Psoas muscle (tissue), 8 donors: ENCODE measurements at regions of chr1 and their contacts with region 1.

Region 1: GRCh38 chr1:161382214-161383019 is 14.7 kb upstream of the CFAP126 start:
- DNase-seq: no peak
- ATAC-seq: peak; percentile 73 to 91 (median 76)
- H3K4me3 ChIP-seq: no peak overlapping the region
- H3K27ac ChIP-seq: no peak overlapping the region
- H3K4me1 ChIP-seq: peaks cover 3% of the 10 kb centered on the region
- H3K27me3 ChIP-seq: no peaks in the 10 kb centered on the region
- CTCF ChIP-seq: peak; percentile 71

Region 2: GRCh38 chr1:161192476-161193465 is 189.6 kb before region 1 on chr1:
- intact Hi-C with region 1: loop called in 1 of 2 experiments (anchors 5 kb)
- DNase-seq: peak; percentile 57 to 61
- ATAC-seq: peak; percentile 64 to 85 (median 64)
- H3K4me3 ChIP-seq: no peak overlapping the region
- H3K27ac ChIP-seq: peak overlapping the region; percentile 15
- H3K4me1 ChIP-seq: peaks cover 4% of the 10 kb centered on the region
- H3K27me3 ChIP-seq: no peaks in the 10 kb centered on the region
- CTCF ChIP-seq: peak; percentile 85

Region 3: GRCh38 chr1:161209790-161210409 is 172.5 kb before region 1 on chr1:
- intact Hi-C with region 1: loop called in 1 of 2 experiments (anchors 5 kb)
- DNase-seq: peak; percentile 73 to 86
- ATAC-seq: peak; percentile 77 to 87 (median 85)
- H3K4me3 ChIP-seq: no peak overlapping the region
- H3K27ac ChIP-seq: no peak overlapping the region
- H3K4me1 ChIP-seq: peaks cover 29% of the 10 kb centered on the region
- H3K27me3 ChIP-seq: no peaks in the 10 kb centered on the region
- CTCF ChIP-seq: peak; percentile 75

Region 4: DNA sequence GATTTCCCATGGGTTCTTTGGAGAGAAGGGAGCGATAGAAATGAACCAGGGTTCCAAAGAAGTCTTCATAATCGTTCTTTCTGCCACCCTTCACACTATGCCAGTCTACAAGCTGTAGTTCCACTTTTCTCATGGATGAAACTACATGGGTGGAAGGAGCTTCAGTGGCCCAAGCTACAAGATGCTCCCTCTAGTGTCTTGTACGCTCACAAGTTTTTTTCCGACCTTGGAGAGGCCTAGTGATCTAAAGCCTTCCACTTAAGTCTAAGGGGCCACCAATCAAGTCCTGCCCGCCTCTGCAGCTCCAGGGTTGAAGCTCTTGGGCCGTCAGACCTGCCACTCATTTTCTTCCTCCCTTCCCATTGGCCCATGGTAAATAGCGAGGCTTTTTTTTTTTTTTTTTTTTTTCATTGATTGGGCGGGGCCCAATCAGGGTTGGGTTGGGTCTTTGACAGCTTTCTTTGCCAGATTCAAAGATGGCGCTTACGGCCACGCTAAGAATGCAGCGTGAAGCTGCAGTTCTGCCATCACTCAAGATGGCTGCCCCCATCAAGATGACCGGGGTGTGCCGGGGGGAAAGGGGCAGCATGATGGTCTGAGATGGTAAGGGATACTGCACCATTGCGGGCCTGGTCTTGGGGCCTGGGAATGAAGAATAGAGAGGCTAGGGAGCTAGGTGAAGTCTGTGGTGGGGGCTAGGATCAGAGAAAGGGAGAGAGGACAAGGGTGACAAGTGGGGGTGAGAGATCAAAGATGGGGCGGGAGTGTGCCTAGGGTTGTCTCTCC is 156.7 kb before region 1 on chr1 and contains the start of gene TOMM40L:
- intact Hi-C with region 1: loop called (anchors 2 to 5 kb)
- DNase-seq: peak; percentile 89 to 95
- ATAC-seq: peak; percentile 95 to 98 (median 96)
- H3K4me3 ChIP-seq: peak within 1 kb of the TSS; percentile 85
- H3K27ac ChIP-seq: peak within 1 kb of the TSS; percentile 77
- H3K4me1 ChIP-seq: peaks cover 12% of the 10 kb centered on the region
- H3K27me3 ChIP-seq: no peaks in the 10 kb centered on the region
- CTCF ChIP-seq: peak; percentile 58
- total RNA-seq, gene TOMM40L: 10.0 to 39.2 (median 27.5) TPM

Region 5: GRCh38 chr1:161314201-161314981 is 68.0 kb before region 1 on chr1 and contains the start of gene SDHC:
- intact Hi-C with region 1: loop called in 1 of 2 experiments (anchors 5 kb)
- DNase-seq: peak; percentile 90 to 94
- ATAC-seq: peak; percentile 99 to 100 (median 99)
- H3K4me3 ChIP-seq: peak within 1 kb of the TSS; percentile 89
- H3K27ac ChIP-seq: peak within 1 kb of the TSS; percentile 96
- H3K4me1 ChIP-seq: peaks cover 23% of the 10 kb centered on the region
- H3K27me3 ChIP-seq: no peaks in the 10 kb centered on the region
- CTCF ChIP-seq: peak; percentile 12
- total RNA-seq, gene SDHC: 230 to 354 (median 261) TPM

Region 6: DNA sequence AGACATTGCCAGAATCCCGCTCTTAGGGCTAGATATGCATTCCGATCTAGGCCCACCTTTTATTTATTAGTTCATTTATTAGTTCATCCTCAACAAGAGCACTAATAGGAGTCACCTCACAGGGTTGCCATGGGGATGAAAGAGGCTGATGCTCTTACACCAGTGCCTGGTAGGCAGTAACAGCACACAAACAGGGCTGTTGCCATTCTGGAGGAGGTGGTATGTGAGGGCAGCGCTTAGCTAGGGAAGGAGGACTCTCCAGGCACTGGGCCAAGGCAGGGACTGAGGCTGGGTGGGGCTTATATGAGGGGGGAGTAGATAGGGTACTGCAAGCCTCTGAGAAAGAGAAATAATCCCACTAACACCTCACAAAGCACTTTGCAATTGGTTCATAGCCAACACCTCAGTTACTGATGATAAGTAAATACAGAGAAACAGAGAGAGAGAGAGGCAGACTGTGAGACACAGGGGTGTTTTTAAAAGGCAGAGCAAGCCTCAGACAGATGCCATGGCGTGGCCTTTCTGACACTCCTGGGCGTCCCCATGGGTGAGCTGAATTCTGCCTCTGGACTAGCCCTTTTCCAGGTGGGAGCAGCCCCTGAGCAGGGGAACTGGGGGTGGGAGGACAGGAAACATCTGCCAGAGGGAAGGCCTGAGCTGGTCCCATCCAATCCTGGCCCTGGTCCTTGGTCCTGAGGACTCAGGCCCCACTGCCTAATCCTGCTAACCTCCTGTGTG is 128.8 kb after region 1 on chr1:
- intact Hi-C with region 1: no loop called
- DNase-seq: peak in 1 of 2 donors; percentile 47
- ATAC-seq: no peak
- H3K4me3 ChIP-seq: no peak overlapping the region
- H3K27ac ChIP-seq: no peak overlapping the region
- H3K4me1 ChIP-seq: no peaks in the 10 kb centered on the region
- H3K27me3 ChIP-seq: peaks cover 0 to 20% (median 0%) of the 10 kb centered on the region in 3 donors
- CTCF ChIP-seq: no peak